ENCODE measurements at regions of chr16 and their contacts with region 1.

Region 1: DNA sequence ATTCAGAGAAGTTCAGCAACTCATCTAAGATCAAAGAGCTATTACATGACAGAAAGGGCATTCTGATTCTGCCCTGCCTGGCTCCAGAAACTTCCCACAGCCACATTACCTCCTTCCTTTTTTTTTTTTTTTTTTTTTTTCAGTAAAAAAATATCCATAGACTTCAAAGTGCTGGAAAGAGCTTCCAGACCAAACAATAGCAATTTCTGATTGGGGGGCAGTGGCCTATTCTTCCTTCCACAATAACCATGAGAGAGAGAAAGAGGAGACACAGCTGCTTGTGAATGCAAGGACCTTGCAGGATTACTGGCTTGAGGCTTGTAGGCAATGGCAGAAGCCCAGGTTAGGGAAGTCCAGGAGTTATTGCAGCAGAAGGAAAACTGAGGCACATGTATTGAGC is 151.0 kb upstream of the TOX3 start:
- DNase-seq: no peak
- CTCF ChIP-seq: no peak

Region 2: GRCh38 chr16:52709306-52709705 is 11.3 kb after region 1 on chr16:
- CTCF ChIA-PET with region 1: interaction called, 12 read pairs
- POLR2A ChIA-PET with region 1: no interaction called
- DNase-seq: no peak
- CTCF ChIP-seq: no peak

Measured in GM10248 (cell line).